ENCODE measurements at regions of chr14 and their contacts with region 1.

Region 1: GRCh38 chr14:55129428-55130195 is 560 bp downstream of the LGALS3 start:
- DNase-seq: peak; percentile 83
- ATAC-seq: peak; percentile 83
- H3K4me3 Mint-ChIP-seq: peak overlapping the region; percentile 90
- H3K27ac Mint-ChIP-seq: peak overlapping the region; percentile 88
- H3K4me1 Mint-ChIP-seq: peaks cover 46% of the 10 kb centered on the region
- H3K27me3 Mint-ChIP-seq: peaks cover 2% of the 10 kb centered on the region
- CTCF ChIP-seq: no peak

Region 2: DNA sequence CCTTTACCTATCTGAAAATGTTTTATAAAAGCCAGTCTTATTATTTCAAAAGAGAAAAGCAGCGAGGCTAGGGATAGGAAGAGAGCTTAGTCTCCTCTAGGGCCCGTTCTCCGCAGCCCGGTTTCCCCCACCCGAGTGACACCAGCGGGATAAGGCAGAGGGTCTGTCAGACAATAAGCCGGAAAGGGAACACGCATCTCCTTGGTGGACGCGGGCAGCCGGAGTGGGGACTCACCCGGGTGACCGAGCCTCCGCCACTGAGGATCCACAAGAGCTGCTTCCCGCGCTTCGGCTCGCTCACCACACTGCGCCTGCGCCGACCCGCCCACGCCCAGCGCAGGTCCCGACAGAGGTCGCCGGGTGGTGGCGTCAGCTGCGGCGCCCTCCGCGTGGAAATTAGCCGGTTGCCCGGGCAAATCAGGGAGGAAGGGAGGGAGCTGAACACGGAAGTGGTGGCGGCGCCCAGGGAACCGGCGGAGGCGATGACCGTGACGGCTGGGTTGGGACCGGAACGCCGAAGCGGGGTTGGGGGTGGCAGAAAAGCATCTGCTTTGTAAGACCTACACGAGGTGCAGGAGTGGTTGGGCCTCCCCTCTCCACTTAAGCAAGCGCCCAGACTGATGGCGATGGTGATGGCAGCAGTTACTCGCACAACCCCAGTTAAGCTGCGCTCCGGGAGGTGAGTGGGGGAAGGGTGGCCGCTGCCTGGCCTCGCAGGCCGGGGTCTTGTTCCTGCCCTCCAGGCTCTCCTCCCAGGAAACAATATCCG is 102.6 kb before region 1 on chr14 and contains the starts of genes SOCS4 and WDHD1:
- CTCF ChIA-PET with region 1: no interaction called
- POLR2A ChIA-PET with region 1: interaction called, 6 read pairs
- intact Hi-C with region 1: loop called (anchors 1 kb)
- DNase-seq: peak; percentile 99
- ATAC-seq: peak; percentile 92
- H3K4me3 Mint-ChIP-seq: peak within 1 kb of the TSS; percentile 95
- H3K27ac Mint-ChIP-seq: peak within 1 kb of the TSS; percentile 92
- H3K4me1 Mint-ChIP-seq: peaks cover 50% of the 10 kb centered on the region
- H3K27me3 Mint-ChIP-seq: no peaks in the 10 kb centered on the region
- CTCF ChIP-seq: no peak
- total RNA-seq, gene SOCS4: 29.2 and 30.3 TPM in 2 replicates
- total RNA-seq, gene WDHD1: 9.3 and 9.5 TPM in 2 replicates

Region 3: DNA sequence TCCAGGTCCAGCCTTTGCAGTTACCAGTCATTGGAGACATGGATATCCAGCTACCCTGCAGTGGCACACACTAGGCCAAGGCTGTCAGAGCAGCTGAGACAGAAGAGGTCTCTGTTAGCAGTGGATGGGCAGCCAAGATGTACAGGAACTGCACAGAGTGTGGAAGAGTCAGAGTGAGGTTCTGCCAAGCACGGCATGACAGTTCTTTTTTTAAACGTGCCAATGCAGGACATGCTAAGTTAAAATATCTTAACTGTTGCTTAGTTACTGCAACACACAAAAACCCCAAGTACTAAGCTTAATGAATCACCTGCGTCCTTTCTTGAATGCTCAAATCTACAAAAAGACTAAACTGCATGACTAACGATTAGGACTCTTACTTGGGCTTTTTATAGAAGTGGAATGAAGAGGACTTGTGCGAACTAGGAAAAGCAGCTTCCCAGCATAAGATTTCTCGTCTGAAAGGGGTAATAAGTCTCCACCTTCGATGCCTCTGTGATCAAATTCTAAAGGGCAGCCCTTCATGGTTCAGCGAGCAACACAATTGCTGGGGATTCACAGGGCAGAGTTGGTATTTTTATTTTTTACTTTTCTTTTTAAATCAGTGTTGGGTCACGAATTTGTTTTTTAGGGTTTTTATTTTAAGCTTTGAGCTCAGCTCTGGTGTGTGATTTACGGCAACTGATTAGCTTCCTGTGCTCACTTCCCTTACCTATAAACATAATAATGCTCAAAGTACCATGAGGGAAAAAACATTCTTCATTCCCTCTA is 57.6 kb before region 1 on chr14:
- CTCF ChIA-PET with region 1: interaction called, 4 read pairs
- POLR2A ChIA-PET with region 1: interaction called, 32 read pairs
- intact Hi-C with region 1: loop called (anchors 1 kb)
- DNase-seq: peak; percentile 47
- ATAC-seq: peak; percentile 77
- H3K4me3 Mint-ChIP-seq: peak overlapping the region; percentile 79
- H3K27ac Mint-ChIP-seq: peak overlapping the region; percentile 98
- H3K4me1 Mint-ChIP-seq: peaks cover 75% of the 10 kb centered on the region
- H3K27me3 Mint-ChIP-seq: no peaks in the 10 kb centered on the region
- CTCF ChIP-seq: no peak

Region 4: DNA sequence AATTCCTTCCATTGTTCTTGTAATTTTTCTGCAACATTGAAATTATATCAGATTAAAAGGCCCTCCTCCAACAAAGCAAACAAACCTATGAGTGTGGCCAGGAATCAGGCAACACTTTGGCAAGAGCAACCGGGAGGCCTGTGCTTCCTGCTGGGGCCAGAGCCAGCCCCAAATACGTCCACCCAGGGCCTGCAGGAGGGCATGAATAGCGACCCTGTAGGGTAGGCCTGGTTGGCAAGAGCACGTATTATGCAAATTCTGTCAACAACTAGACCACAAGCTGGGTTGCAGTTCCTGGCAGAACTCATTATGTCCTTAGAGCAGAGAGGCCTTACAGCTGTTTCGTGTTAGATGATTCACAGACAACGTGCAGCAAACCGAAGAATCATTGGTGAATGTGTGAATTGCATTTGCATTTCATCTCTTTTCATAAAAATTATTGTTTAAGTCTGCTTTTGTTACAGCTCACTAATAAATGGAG is 27.4 kb before region 1 on chr14:
- CTCF ChIA-PET with region 1: interaction called, 3 read pairs
- POLR2A ChIA-PET with region 1: interaction called, 78 read pairs
- intact Hi-C with region 1: loop called (anchors 1 kb)
- DNase-seq: peak; percentile 37
- ATAC-seq: peak; percentile 77
- H3K4me3 Mint-ChIP-seq: peak overlapping the region; percentile 61
- H3K27ac Mint-ChIP-seq: peak overlapping the region; percentile 87
- H3K4me1 Mint-ChIP-seq: peaks cover 55% of the 10 kb centered on the region
- H3K27me3 Mint-ChIP-seq: no peaks in the 10 kb centered on the region
- CTCF ChIP-seq: no peak

Region 5: DNA sequence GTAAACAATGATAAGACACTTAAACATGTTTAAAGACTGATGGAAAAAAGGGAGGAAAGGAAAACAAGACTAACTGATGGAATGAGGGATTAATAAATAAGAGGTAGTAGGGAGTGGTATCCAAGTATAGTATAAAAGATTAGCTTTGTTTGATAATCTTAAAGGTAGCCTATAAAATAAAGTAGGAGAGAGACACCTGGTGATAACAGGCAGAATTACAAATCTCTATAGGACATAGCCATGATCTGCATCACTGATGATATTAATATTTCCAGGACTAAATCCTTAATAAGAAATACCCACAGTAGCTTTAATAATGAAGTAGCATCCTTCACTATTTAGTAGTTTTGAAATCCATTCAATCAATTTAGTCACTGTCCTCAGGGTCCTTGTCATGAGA is 31.4 kb after region 1 on chr14:
- CTCF ChIA-PET with region 1: interaction called, 16 read pairs
- POLR2A ChIA-PET with region 1: interaction called, 14 read pairs
- intact Hi-C with region 1: loop called (anchors 1 kb)
- DNase-seq: no peak
- ATAC-seq: peak; percentile 75
- H3K4me3 Mint-ChIP-seq: no peak overlapping the region
- H3K27ac Mint-ChIP-seq: no peak overlapping the region
- H3K4me1 Mint-ChIP-seq: peaks cover 2% of the 10 kb centered on the region
- H3K27me3 Mint-ChIP-seq: no peaks in the 10 kb centered on the region
- CTCF ChIP-seq: no peak

Region 6: DNA sequence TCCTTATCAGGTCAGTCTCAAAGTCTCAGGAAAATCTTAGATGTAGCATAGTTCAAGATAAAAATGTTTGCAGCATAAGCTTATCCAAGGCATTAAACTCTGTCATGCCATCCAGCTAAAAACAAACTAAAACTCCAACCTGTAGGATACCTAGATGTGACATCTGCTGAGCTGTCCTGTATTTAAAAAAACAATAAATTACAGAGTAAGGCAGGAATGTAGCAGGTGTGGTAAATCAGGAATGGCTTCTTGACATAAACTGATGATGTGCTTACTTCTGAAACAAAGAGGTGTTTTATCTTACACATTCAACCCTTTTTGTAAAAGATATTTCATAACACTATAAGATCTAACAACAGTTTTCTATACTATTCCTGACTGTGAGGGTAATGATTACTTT is 92.4 kb after region 1 on chr14:
- CTCF ChIA-PET with region 1: no interaction called
- POLR2A ChIA-PET with region 1: no interaction called
- intact Hi-C with region 1: no loop called
- DNase-seq: no peak
- ATAC-seq: no peak
- H3K4me3 Mint-ChIP-seq: no peak overlapping the region
- H3K27ac Mint-ChIP-seq: no peak overlapping the region
- H3K4me1 Mint-ChIP-seq: no peaks in the 10 kb centered on the region
- H3K27me3 Mint-ChIP-seq: peaks cover 2% of the 10 kb centered on the region
- CTCF ChIP-seq: no peak

Region 7: DNA sequence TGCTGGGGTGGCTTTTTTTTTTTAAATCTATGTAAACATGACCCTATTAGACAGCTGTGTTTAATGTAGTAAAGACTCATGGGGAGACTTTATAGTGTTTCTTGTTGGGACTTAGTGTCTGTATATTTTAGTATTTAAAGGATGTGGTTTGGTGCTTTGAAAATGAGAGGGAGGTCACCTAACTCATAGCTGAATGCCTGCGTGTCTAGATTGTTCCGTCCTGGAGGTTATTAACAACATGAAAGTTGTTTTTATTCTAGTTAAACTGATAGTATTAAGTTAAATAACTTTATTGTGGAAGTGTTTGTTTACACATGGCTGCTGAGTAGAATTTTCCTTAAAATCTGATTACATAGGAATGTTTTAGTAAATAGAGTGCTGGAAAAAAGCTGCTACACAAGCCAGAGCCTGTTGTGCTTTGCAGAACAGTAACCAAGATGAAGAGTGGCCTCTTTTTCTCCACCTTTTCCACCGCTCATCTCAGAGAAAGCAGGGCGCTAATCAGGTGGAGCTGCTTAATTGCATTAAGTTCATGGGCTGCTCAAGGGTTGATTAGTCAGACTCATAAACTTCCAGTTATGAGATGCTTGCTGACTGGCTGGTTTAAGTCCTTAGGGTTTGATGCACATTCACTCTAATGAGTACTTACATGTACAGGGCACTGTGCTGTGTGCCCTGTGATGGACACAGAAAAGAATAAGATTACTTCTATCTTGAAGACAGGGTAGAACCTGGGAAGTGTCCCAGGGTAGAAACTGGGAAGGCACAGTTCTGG is 204.3 kb after region 1 on chr14:
- CTCF ChIA-PET with region 1: no interaction called
- POLR2A ChIA-PET with region 1: no interaction called
- intact Hi-C with region 1: no loop called
- DNase-seq: no peak
- ATAC-seq: peak; percentile 57
- H3K4me3 Mint-ChIP-seq: peak overlapping the region; percentile 44
- H3K27ac Mint-ChIP-seq: peak overlapping the region; percentile 62
- H3K4me1 Mint-ChIP-seq: peaks cover 48% of the 10 kb centered on the region
- H3K27me3 Mint-ChIP-seq: no peaks in the 10 kb centered on the region
- CTCF ChIP-seq: no peak